CD8-positive, alpha-beta T cell (primary cell): ENCODE measurements at regions of chr11 and their contacts with region 1.

Region 1: GRCh38 chr11:9573052-9573774 is at the start of gene WEE1:
- DNase-seq: peak; percentile 90 to 97 (median 96)
- ATAC-seq: peak; percentile 90
- H3K4me3 ChIP-seq: peak within 1 kb of the TSS; percentile 76 to 95
- H3K4me3 Mint-ChIP-seq: peak within 1 kb of the TSS; percentile 86
- H3K27ac ChIP-seq: peak within 1 kb of the TSS; percentile 41 to 62
- H3K27ac Mint-ChIP-seq: peak within 1 kb of the TSS; percentile 70
- H3K4me1 ChIP-seq: peaks cover 11% of the 10 kb centered on the region
- H3K4me1 Mint-ChIP-seq: peaks cover 23% of the 10 kb centered on the region
- H3K27me3 ChIP-seq: no peaks in the 10 kb centered on the region
- H3K27me3 Mint-ChIP-seq: peaks cover 11% of the 10 kb centered on the region
- CTCF ChIP-seq: no peak
- total RNA-seq, gene WEE1: 3.9 to 5.3 TPM

Region 2: GRCh38 chr11:8911029-8911826 is 662.0 kb before region 1 on chr11 and contains the start of gene AKIP1:
- CTCF ChIA-PET with region 1: no interaction called
- POLR2A ChIA-PET with region 1: no interaction called
- intact Hi-C with region 1: loop called in 1 of 2 experiments (anchors 10 kb)
- DNase-seq: peak; percentile 37 to 93 (median 83)
- ATAC-seq: peak; percentile 77
- H3K4me3 ChIP-seq: peak within 1 kb of the TSS; percentile 76 to 94
- H3K4me3 Mint-ChIP-seq: peak within 1 kb of the TSS; percentile 91
- H3K27ac ChIP-seq: peak within 1 kb of the TSS; percentile 51 to 78
- H3K27ac Mint-ChIP-seq: peak within 1 kb of the TSS; percentile 90
- H3K4me1 ChIP-seq: peaks cover 23% of the 10 kb centered on the region
- H3K4me1 Mint-ChIP-seq: peaks cover 37% of the 10 kb centered on the region
- H3K27me3 ChIP-seq: no peaks in the 10 kb centered on the region
- H3K27me3 Mint-ChIP-seq: no peaks in the 10 kb centered on the region
- CTCF ChIP-seq: no peak
- total RNA-seq, gene AKIP1: 3.9 to 4.2 TPM

Region 3: DNA sequence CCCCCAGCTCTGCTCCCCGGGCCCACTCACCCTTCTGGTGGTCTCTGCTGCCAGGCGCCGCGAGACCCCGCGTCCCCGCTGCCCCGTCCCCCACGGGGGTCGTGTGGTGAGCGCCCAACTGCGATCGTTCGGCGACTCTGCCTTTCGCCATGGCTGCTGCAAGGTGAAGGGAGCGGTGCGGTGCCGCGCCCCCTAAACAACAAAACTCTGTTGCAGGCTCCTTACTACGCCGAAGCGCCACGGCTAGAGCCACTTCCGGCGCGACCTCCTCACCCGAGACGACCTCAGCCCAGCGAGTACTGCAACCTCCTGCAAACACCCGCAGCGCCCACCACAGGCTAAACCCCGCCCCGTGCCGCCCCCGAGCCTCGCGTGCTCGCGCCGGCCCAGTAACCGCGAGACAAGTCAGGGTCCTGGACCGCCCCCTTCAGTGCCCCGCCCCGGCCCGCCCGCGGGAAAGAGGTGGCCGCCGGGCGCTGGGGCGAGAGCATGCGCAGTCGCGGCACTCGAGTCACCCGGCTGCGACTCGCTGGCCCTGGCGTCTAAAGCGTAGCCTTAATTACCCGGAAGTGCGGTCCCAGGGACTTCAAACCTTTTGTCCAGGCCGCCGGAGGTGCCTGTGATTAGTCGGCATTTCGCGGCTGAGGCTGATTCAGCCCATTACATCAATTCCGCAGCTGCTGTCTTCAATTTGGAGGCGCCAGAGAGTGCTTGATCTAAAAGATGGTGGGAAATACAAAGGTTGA is 258.7 kb before region 1 on chr11 and contains the start of gene TMEM41B:
- CTCF ChIA-PET with region 1: no interaction called
- POLR2A ChIA-PET with region 1: interaction called, 5 read pairs
- intact Hi-C with region 1: loop called in 1 of 2 experiments (anchors 10 kb)
- DNase-seq: peak; percentile 98 to 100 (median 100)
- ATAC-seq: peak; percentile 96
- H3K4me3 ChIP-seq: peak within 1 kb of the TSS; percentile 85 to 99
- H3K4me3 Mint-ChIP-seq: peak within 1 kb of the TSS; percentile 98
- H3K27ac ChIP-seq: peak within 1 kb of the TSS; percentile 87 to 97
- H3K27ac Mint-ChIP-seq: peak within 1 kb of the TSS; percentile 98
- H3K4me1 ChIP-seq: peaks cover 29% of the 10 kb centered on the region
- H3K4me1 Mint-ChIP-seq: peaks cover 35% of the 10 kb centered on the region
- H3K27me3 ChIP-seq: no peaks in the 10 kb centered on the region
- H3K27me3 Mint-ChIP-seq: peaks cover 2% of the 10 kb centered on the region
- CTCF ChIP-seq: no peak
- total RNA-seq, gene TMEM41B: 36.8 TPM

Region 4: GRCh38 chr11:9601037-9601875 is 28.0 kb after region 1 on chr11:
- CTCF ChIA-PET with region 1: interaction called, 3 read pairs
- POLR2A ChIA-PET with region 1: interaction called, 11 read pairs
- intact Hi-C with region 1: no loop called
- DNase-seq: peak in 8 of 9 experiments; percentile 28 to 91 (median 57)
- ATAC-seq: peak; percentile 90
- H3K4me3 ChIP-seq: peak overlapping the region; percentile 5 to 28
- H3K4me3 Mint-ChIP-seq: peak overlapping the region; percentile 62
- H3K27ac ChIP-seq: peak overlapping the region; percentile 3 to 79
- H3K27ac Mint-ChIP-seq: peak overlapping the region; percentile 89
- H3K4me1 ChIP-seq: peaks cover 14% of the 10 kb centered on the region
- H3K4me1 Mint-ChIP-seq: peaks cover 20% of the 10 kb centered on the region
- H3K27me3 ChIP-seq: no peaks in the 10 kb centered on the region
- H3K27me3 Mint-ChIP-seq: peaks cover 3% of the 10 kb centered on the region
- CTCF ChIP-seq: no peak

Region 5: DNA sequence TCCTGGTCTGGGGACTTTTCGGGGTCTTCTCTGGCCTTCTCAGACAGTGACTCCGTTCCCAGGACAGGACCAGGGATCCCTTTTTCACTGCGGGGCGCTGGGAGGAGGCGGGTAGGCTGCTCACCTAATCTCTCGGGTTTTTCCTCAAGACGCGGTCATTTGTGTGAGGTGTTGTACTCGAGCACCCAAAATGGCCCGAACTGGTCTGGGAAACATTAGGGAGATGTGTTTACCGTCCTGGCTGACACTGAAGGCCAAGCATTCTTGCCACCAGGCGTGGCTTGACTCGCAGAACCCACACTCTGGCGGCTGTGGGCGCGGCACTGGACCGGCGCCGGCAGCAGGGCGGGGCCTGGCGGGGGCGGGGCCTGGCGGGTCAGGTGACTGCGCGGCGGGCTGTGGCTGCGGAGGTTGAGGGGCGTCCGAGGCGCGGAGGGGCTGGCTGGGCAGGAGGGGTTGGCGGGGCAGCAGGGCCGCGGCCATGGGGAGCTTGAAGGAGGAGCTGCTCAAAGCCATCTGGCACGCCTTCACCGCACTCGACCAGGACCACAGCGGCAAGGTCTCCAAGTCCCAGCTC is 90.6 kb after region 1 on chr11 and contains the start of gene SWAP70:
- CTCF ChIA-PET with region 1: no interaction called
- POLR2A ChIA-PET with region 1: no interaction called
- intact Hi-C with region 1: loop called in 1 of 2 experiments (anchors 5 kb)
- DNase-seq: peak; percentile 47 to 82 (median 74)
- ATAC-seq: peak; percentile 90
- H3K4me3 ChIP-seq: peak within 1 kb of the TSS; percentile 78 to 80
- H3K4me3 Mint-ChIP-seq: peak within 1 kb of the TSS; percentile 88
- H3K27ac ChIP-seq: peak within 1 kb of the TSS in 1 of 2 experiments; percentile 11
- H3K27ac Mint-ChIP-seq: peak within 1 kb of the TSS; percentile 75
- H3K4me1 ChIP-seq: peaks cover 11% of the 10 kb centered on the region
- H3K4me1 Mint-ChIP-seq: peaks cover 19% of the 10 kb centered on the region
- H3K27me3 ChIP-seq: peaks cover 0 to 3% of the 10 kb centered on the region in 2 experiments
- H3K27me3 Mint-ChIP-seq: peaks cover 28% of the 10 kb centered on the region
- CTCF ChIP-seq: no peak
- total RNA-seq, gene SWAP70: 4.2 to 4.6 TPM

Region 6: GRCh38 chr11:10293423-10294289 is 720.4 kb after region 1 on chr11 and contains the start of gene SBF2:
- CTCF ChIA-PET with region 1: no interaction called
- POLR2A ChIA-PET with region 1: no interaction called
- intact Hi-C with region 1: loop called in 1 of 2 experiments (anchors 1 kb)
- DNase-seq: peak; percentile 60 to 90 (median 80)
- ATAC-seq: peak; percentile 67
- H3K4me3 ChIP-seq: peak within 1 kb of the TSS; percentile 50 to 67
- H3K4me3 Mint-ChIP-seq: peak within 1 kb of the TSS; percentile 78
- H3K27ac ChIP-seq: no peak within 1 kb of the TSS
- H3K27ac Mint-ChIP-seq: no peak within 1 kb of the TSS
- H3K4me1 ChIP-seq: peaks cover 23% of the 10 kb centered on the region
- H3K4me1 Mint-ChIP-seq: peaks cover 32% of the 10 kb centered on the region
- H3K27me3 ChIP-seq: peaks cover 6 to 12% of the 10 kb centered on the region in 2 experiments
- H3K27me3 Mint-ChIP-seq: peaks cover 17% of the 10 kb centered on the region
- CTCF ChIP-seq: no peak
- total RNA-seq, gene SBF2: 12.6 to 14.3 TPM